Activated B cell treated with CpG ODN at 0.5 μM for 24 hours (primary cell): ENCODE measurements at regions of chr3 and their contacts with region 1.

Region 1: GRCh38 chr3:196159952-196160804 is 51.0 kb downstream of the ZDHHC19 start:
- DNase-seq: peak; percentile 50
- ATAC-seq: peak; percentile 99
- H3K4me3 Mint-ChIP-seq: peak overlapping the region; percentile 73
- H3K27ac Mint-ChIP-seq: peak overlapping the region; percentile 92
- H3K4me1 Mint-ChIP-seq: peaks cover 22% of the 10 kb centered on the region
- H3K27me3 Mint-ChIP-seq: no peaks in the 10 kb centered on the region
- CTCF ChIP-seq: no peak

Region 2: DNA sequence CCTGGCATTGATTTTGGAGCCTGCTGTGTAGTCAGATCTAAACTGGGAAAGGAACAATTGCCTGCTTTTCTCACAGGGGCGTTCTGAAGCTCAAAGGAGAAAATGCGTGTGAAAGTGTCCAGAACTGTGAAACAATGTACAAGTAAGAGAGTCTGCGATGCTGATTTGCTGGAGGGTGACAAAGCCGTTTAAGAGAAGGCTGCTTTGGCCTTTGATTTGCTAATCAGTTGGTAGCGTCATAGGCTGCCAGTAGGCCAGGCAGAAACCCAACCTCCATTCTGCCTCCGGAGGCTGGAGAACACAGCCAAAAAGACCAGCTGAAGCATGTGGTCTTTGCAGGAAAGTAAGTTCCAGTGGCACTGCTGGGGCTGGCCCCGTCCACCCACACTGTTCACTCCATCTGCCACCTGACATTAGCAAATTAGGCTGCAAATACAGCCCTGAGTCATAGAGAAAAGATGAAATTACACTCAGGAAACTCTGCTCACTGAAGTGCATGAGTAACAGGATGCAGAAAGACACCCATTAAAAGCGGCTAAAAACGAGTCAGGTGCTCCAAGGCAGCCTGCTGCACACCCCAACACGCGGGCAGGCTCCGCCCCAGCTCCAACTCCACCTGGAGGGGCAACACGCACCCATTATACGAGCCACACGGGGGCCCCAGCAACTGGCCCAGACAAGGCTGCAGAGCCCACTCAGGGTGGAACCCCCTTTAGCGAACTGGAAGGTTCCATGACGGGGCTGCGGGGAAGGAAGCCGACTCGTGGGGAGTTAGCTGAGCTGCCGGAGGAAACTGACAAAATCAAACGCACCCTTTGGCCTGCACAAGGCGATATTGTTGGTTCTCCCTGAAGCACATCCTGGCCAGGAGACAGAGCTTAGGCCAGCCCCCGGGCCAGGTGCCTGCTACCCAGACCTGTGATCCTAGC is 19.5 kb after region 1 on chr3:
- CTCF ChIA-PET with region 1: no interaction called
- POLR2A ChIA-PET with region 1: interaction called, 36 read pairs
- intact Hi-C with region 1: loop called (anchors 1 kb)
- DNase-seq: peak; percentile 73
- ATAC-seq: peak; percentile 80
- H3K4me3 Mint-ChIP-seq: peak overlapping the region; percentile 66
- H3K27ac Mint-ChIP-seq: peak overlapping the region; percentile 97
- H3K4me1 Mint-ChIP-seq: peaks cover 48% of the 10 kb centered on the region
- H3K27me3 Mint-ChIP-seq: no peaks in the 10 kb centered on the region
- CTCF ChIP-seq: no peak

Region 3: GRCh38 chr3:196192036-196192523 is 31.9 kb after region 1 on chr3:
- CTCF ChIA-PET with region 1: interaction called, 4 read pairs
- POLR2A ChIA-PET with region 1: interaction called, 16 read pairs
- intact Hi-C with region 1: loop called (anchors 1 kb)
- DNase-seq: peak; percentile 68
- ATAC-seq: peak; percentile 73
- H3K4me3 Mint-ChIP-seq: peak overlapping the region; percentile 70
- H3K27ac Mint-ChIP-seq: peak overlapping the region; percentile 98
- H3K4me1 Mint-ChIP-seq: peaks cover 62% of the 10 kb centered on the region
- H3K27me3 Mint-ChIP-seq: no peaks in the 10 kb centered on the region
- CTCF ChIP-seq: no peak